ENCODE measurements at regions of chr3 and their contacts with region 1.

Region 1: DNA sequence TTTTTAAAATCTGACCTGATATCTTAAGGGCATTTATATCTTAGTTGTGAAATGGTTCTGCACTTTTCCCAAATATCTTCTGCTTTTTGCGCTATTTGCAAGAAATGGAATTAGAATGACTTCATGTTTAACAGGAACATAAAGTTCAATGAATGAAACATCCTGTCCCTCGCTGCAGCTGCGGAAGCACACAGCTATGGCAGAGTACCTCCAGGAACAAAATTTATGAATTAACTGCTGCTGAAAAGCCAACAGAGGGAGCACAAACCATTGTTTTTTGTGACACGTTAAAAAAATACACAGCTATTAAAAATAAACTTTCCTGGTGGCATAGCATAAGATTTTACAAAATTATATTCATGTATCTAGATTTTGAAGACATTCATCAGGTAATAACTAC is 404.4 kb upstream of the MDFIC2 start:
- DNase-seq: no peak
- H3K4me3 ChIP-seq: no peak overlapping the region
- H3K27ac ChIP-seq: no peak overlapping the region
- H3K4me1 ChIP-seq: peaks cover 0 to 15% (median 10%) of the 10 kb centered on the region in 4 donors
- H3K27me3 ChIP-seq: no peaks in the 10 kb centered on the region
- CTCF ChIP-seq: peak; percentile 59 to 64 (median 61)
- EP300 ChIP-seq: peak; percentile 55
- POLR2A ChIP-seq: no peak

Region 2: GRCh38 chr3:71641674-71642073 is 924.8 kb after region 1 on chr3:
- intact Hi-C with region 1: loop called (anchors 10 kb)
- DNase-seq: no peak
- H3K4me3 ChIP-seq: no peak overlapping the region
- H3K27ac ChIP-seq: no peak overlapping the region
- H3K4me1 ChIP-seq: peaks cover 0 to 10% (median 1%) of the 10 kb centered on the region in 4 donors
- H3K27me3 ChIP-seq: no peaks in the 10 kb centered on the region
- CTCF ChIP-seq: no peak
- EP300 ChIP-seq: no peak
- POLR2A ChIP-seq: no peak

Measured in esophagus muscularis mucosa (tissue), 4 donors.